Activated B cell treated with CpG ODN at 0.5 μM for 24 hours (primary cell): ENCODE measurements at regions of chr15 and their contacts with region 1.

Region 1: DNA sequence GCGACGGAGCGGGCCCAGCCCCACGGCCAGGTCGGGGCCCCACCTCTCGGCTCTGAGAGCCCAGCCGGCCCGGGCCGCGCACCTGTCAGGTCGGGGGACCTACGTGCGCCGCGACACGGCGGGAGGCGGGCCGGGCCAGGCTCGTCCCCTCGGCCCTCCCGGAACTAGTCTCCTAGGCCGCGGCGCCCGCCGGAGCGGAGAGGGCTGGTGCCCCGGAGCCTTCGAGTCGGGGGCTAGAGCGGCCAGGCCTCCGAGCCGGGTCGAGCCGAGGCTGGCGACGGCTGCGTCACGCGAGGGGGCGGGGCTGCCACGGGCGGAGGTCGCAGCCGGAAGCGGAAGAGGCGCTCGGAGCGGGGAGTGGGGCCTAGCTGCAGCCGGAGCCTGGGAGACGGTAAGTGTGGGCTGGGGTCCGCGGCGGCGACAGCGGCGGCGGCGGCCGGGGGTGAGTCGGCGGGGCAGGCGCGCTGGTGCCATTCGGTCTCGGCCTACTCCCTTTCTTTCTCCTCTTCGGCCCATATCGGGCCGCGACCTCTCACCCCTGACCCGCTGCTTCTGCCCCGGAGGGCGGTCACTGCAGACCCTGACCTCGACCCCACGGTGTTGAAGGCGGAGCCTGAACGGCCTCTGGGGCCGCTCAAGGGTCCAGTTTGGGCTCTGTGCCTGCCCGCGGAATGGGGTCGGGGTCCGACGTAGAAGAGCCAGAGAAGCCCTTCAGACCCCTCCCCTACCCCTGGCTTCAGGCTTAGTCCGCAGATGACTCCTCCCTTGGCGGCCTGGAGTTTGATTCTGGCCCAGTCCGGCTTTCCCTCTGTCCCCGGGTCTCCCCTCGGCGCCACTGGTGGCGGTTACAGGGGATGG is at the start of gene CLK3:
- DNase-seq: peak; percentile 99
- ATAC-seq: peak; percentile 83
- H3K4me3 Mint-ChIP-seq: peak within 1 kb of the TSS; percentile 89
- H3K27ac Mint-ChIP-seq: peak within 1 kb of the TSS; percentile 95
- H3K4me1 Mint-ChIP-seq: peaks cover 35% of the 10 kb centered on the region
- H3K27me3 Mint-ChIP-seq: no peaks in the 10 kb centered on the region
- CTCF ChIP-seq: no peak
- total RNA-seq, gene CLK3: 100 and 116 TPM in 2 replicates

Region 2: GRCh38 chr15:74433592-74434262 is 182.0 kb before region 1 on chr15 and contains the start of gene SEMA7A:
- CTCF ChIA-PET with region 1: no interaction called
- POLR2A ChIA-PET with region 1: interaction called, 10 read pairs
- intact Hi-C with region 1: no loop called
- DNase-seq: peak; percentile 83
- ATAC-seq: peak; percentile 80
- H3K4me3 Mint-ChIP-seq: peak within 1 kb of the TSS; percentile 96
- H3K27ac Mint-ChIP-seq: peak within 1 kb of the TSS; percentile 90
- H3K4me1 Mint-ChIP-seq: peaks cover 76% of the 10 kb centered on the region
- H3K27me3 Mint-ChIP-seq: no peaks in the 10 kb centered on the region
- CTCF ChIP-seq: no peak
- total RNA-seq, gene SEMA7A: 159 and 178 TPM in 2 replicates

Region 3: GRCh38 chr15:74545880-74546656 is 69.7 kb before region 1 on chr15:
- CTCF ChIA-PET with region 1: interaction called, 4 read pairs
- POLR2A ChIA-PET with region 1: interaction called, 37 read pairs
- intact Hi-C with region 1: loop called (anchors 1 kb)
- DNase-seq: peak; percentile 64
- ATAC-seq: peak; percentile 36
- H3K4me3 Mint-ChIP-seq: peak overlapping the region; percentile 38
- H3K27ac Mint-ChIP-seq: peak overlapping the region; percentile 70
- H3K4me1 Mint-ChIP-seq: peaks cover 56% of the 10 kb centered on the region
- H3K27me3 Mint-ChIP-seq: no peaks in the 10 kb centered on the region
- CTCF ChIP-seq: no peak

Region 4: DNA sequence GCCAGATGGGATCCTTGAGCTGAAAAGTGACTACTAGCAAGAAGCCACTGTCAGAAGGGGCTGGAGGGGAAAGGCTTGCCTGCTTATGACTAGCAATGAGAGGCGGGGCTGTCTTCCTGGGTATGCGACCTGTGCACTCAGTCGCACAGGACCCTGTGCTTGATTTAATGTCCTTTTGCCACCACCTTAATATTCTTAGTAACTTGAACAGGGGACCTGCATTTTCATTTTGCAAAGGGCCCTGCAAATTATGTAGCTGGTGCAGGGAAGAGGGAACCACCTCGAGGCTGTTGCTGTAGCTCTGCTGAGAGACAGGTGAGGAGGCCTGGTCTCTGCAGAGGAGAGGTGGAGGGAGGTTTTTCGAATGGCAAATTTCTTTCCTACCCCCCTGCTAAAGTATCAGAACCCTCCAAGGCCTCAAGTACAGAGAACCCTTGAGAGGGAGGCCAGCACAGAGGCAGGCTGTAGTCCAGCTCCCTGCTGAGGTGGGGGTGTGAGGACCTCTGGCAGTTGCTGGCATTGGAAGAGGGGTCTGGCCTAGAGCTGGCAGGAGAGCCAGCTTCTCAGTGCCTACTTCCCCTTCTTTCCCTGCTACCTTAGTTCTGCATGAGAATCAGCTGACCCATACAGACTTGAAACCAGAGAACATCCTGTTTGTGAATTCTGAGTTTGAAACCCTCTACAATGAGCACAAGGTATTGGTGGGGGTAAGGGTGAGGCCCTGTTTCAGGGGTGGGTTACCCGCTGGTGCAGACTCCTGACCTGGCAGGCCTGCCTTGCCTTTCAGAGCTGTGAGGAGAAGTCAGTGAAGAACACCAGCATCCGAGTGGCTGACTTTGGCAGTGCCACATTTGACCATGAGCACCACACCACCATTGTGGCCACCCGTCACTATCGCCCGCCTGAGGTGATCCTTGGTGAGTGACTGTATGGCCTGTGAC is 11.3 kb after region 1 on chr15:
- CTCF ChIA-PET with region 1: interaction called, 136 read pairs
- POLR2A ChIA-PET with region 1: interaction called, 22 read pairs
- intact Hi-C with region 1: loop called (anchors 2 kb)
- DNase-seq: no peak
- ATAC-seq: peak; percentile 49
- H3K4me3 Mint-ChIP-seq: peak overlapping the region; percentile 60
- H3K27ac Mint-ChIP-seq: peak overlapping the region; percentile 89
- H3K4me1 Mint-ChIP-seq: peaks cover 71% of the 10 kb centered on the region
- H3K27me3 Mint-ChIP-seq: no peaks in the 10 kb centered on the region
- CTCF ChIP-seq: no peak

Region 5: GRCh38 chr15:74709011-74709410 is 93.3 kb after region 1 on chr15:
- CTCF ChIA-PET with region 1: no interaction called
- POLR2A ChIA-PET with region 1: no interaction called
- intact Hi-C with region 1: no loop called
- DNase-seq: no peak
- ATAC-seq: no peak
- H3K4me3 Mint-ChIP-seq: no peak overlapping the region
- H3K27ac Mint-ChIP-seq: no peak overlapping the region
- H3K4me1 Mint-ChIP-seq: no peaks in the 10 kb centered on the region
- H3K27me3 Mint-ChIP-seq: peaks cover 26% of the 10 kb centered on the region
- CTCF ChIP-seq: no peak

Region 6: GRCh38 chr15:74842581-74843444 is 227.1 kb after region 1 on chr15 and contains the start of gene ULK3:
- CTCF ChIA-PET with region 1: no interaction called
- POLR2A ChIA-PET with region 1: no interaction called
- intact Hi-C with region 1: no loop called
- DNase-seq: peak; percentile 97
- ATAC-seq: peak; percentile 95
- H3K4me3 Mint-ChIP-seq: peak within 1 kb of the TSS; percentile 91
- H3K27ac Mint-ChIP-seq: peak within 1 kb of the TSS; percentile 77
- H3K4me1 Mint-ChIP-seq: peaks cover 48% of the 10 kb centered on the region
- H3K27me3 Mint-ChIP-seq: no peaks in the 10 kb centered on the region
- CTCF ChIP-seq: no peak
- total RNA-seq, gene ULK3: 43.6 and 52.1 TPM in 2 replicates

Region 7: DNA sequence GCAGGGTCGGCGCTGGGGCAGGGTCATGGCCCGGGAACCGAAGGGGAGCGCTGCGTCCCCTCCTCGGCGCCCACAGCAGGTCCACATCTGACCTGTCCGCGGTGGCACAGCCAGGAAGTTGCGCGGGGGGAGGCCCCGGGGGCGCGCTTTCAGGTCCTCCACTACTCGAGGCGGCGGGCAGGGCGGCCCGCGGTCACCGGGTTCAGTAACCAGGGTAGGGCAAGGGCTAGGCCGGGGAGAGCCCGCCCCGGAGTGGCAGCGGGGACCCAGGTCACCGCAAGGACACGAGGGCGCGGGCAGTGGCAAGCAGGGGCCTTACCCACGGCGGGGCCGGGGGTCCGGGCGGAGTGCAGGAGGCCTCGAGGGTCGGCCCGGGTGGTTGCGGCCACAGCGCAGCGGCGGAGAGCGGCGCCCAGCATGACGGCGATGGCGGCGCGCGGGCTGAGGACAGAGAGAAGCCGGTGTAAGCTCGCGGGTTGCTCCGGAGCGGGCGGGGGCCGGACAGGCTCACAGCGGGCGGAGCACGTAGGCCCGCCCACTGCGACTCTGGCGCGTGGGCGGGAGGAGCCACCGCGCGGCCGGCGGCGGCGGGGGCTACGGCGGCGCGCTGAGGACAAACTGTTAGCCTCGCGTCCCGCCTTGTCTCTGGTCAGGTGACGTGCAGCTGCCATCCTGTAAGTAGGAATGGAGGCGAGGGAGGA is 322.0 kb after region 1 on chr15 and contains the start of gene COX5A:
- CTCF ChIA-PET with region 1: no interaction called
- POLR2A ChIA-PET with region 1: interaction called, 3 read pairs
- intact Hi-C with region 1: loop called (anchors 2 kb)
- DNase-seq: peak; percentile 86
- ATAC-seq: peak; percentile 97
- H3K4me3 Mint-ChIP-seq: peak within 1 kb of the TSS; percentile 86
- H3K27ac Mint-ChIP-seq: peak within 1 kb of the TSS; percentile 90
- H3K4me1 Mint-ChIP-seq: peaks cover 34% of the 10 kb centered on the region
- H3K27me3 Mint-ChIP-seq: no peaks in the 10 kb centered on the region
- CTCF ChIP-seq: no peak
- total RNA-seq, gene COX5A: 150 and 159 TPM in 2 replicates